ENCODE measurements at regions of chrX and their contacts with region 1.

Region 1: DNA sequence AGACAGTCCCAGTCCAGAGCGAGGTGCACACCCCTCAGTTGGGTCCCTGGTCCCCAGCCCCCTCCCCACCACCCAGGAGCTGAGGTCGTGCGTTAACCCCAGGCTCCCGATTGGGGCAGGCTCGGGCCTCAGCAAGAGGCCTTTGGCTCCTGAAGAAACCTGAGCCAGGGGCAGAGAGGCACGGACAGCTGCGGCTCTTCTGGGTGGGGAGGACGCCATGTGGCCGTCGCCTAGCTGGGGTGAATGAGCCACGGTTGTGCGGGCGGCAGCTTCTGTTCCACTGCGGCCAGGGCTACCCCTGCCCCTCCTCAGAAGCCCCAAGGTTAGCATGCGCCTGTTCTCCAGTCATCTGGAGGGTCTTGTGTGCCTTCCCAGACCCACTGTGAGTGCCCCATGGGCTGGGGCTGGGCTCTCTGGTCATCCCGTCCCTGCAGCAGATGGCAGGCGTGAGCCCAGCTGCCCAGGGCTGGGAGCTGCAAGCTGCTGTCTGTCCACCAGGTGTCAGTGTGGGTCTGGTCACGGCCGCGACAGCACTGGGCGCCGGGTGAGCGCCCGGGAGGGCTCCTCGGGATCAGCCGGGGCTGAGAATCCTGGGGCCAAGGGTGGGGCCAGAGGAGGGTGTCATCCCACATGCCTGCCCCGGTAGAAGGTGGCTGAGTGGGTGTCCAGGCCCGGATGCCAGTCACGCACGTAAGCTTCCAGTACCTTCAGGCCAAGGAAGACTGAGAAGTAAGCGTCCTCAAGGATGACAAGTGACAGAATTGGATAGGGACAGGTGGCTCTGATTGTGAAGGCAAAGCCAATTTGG is 21.9 kb downstream of the ATP2B3 start:
- DNase-seq: peak; percentile 44
- ATAC-seq: peak; percentile 98
- H3K4me3 ChIP-seq: no peak overlapping the region
- H3K27ac ChIP-seq: no peak overlapping the region
- H3K4me1 ChIP-seq: no peaks in the 10 kb centered on the region
- H3K27me3 ChIP-seq: peaks cover 7% of the 10 kb centered on the region; the same call in 1 of the 2 replicates
- CTCF ChIP-seq: peak; percentile 96
- POLR2A ChIP-seq: no peak
- RAD21 ChIP-seq: peak; percentile 75

Region 2: DNA sequence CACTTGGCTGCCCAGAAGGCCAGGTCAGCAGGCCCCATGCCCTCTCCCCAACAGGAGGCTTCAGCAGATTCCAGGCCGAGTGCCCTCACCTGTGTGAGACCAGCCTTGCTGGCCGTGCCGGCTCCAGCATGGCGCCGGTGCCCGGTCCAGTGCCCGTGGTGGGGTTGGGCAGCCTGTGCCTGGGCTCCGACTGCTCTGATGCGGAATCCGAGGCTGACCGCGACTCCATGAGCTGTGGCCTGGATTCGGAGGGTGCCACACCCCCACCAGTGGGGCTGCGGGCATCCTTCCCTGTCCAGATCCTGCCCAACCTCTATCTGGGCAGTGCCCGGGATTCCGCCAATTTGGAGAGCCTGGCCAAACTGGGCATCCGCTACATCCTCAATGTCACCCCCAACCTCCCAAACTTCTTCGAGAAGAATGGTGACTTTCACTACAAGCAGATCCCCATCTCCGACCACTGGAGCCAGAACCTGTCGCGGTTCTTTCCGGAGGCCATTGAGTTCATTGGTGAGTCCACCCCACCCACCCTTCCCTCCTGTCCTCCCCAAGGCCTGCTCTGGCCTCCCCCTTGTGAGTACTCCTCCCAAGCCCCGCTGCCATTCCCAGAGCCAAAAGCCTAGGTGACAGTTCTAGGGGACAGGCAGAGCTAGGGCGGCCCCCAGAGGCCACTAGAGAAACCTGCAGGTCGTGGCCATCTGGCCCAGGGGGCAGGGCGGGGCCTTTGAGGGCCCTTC is 110.0 kb after region 1 on chrX:
- CTCF ChIA-PET with region 1: no interaction called
- POLR2A ChIA-PET with region 1: no interaction called
- dilution Hi-C with region 1: no loop called
- in situ Hi-C with region 1: no loop called
- intact Hi-C with region 1: loop called (anchors 1 kb)
- DNase-seq: no peak
- ATAC-seq: peak; percentile 56
- H3K4me3 ChIP-seq: no peak overlapping the region
- H3K27ac ChIP-seq: no peak overlapping the region
- H3K4me1 ChIP-seq: no peaks in the 10 kb centered on the region
- H3K27me3 ChIP-seq: peaks cover 38% of the 10 kb centered on the region
- CTCF ChIP-seq: peak; percentile 20; the same call in 1 of the 2 replicates
- POLR2A ChIP-seq: no peak
- RAD21 ChIP-seq: peak; percentile 32; the same call in 1 of the 2 replicates